PC-9 (cell line): ENCODE measurements at regions of chr1 and their contacts with region 1.

Region 1: DNA sequence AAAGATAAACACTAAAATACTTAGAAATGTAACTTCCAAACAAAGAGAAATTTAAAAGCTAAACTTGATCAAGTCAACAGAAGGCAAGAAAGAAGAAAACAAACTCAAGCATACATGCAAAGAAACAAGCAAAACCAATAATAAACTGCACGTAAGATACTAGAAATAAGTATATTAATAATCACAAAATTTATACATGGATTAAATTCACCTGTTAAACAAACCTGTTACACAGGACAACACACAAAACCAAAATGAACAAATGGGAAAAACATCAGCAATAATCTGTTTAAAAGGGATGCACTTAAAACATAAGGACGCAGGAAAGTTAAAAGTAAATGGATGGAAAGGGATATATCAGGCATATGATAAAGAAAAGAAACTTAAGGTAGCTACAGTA is 165.8 kb downstream of the CDC42BPA start:
- DNase-seq: no peak
- H3K4me3 ChIP-seq: no peak overlapping the region
- H3K27ac ChIP-seq: no peak overlapping the region
- H3K4me1 ChIP-seq: no peaks in the 10 kb centered on the region
- H3K27me3 ChIP-seq: no peaks in the 10 kb centered on the region
- CTCF ChIP-seq: no peak

Region 2: GRCh38 chr1:227111782-227112181 is 40.7 kb before region 1 on chr1:
- CTCF ChIA-PET with region 1: no interaction called
- POLR2A ChIA-PET with region 1: no interaction called
- intact Hi-C with region 1: loop called (anchors 5 kb)
- DNase-seq: no peak
- H3K4me3 ChIP-seq: no peak overlapping the region
- H3K27ac ChIP-seq: no peak overlapping the region
- H3K4me1 ChIP-seq: no peaks in the 10 kb centered on the region
- H3K27me3 ChIP-seq: no peaks in the 10 kb centered on the region
- CTCF ChIP-seq: no peak

Region 3: GRCh38 chr1:227314014-227314848 is 161.7 kb after region 1 on chr1:
- CTCF ChIA-PET with region 1: no interaction called
- POLR2A ChIA-PET with region 1: no interaction called
- intact Hi-C with region 1: no loop called
- DNase-seq: no peak
- H3K4me3 ChIP-seq: peak overlapping the region; percentile 77
- H3K27ac ChIP-seq: no peak overlapping the region
- H3K4me1 ChIP-seq: peaks cover 35% of the 10 kb centered on the region; the same call in 1 of the 2 replicates
- H3K27me3 ChIP-seq: no peaks in the 10 kb centered on the region
- CTCF ChIP-seq: no peak

Region 4: GRCh38 chr1:227707807-227708206 is 555.3 kb after region 1 on chr1:
- CTCF ChIA-PET with region 1: no interaction called
- POLR2A ChIA-PET with region 1: no interaction called
- intact Hi-C with region 1: no loop called
- DNase-seq: no peak
- H3K4me3 ChIP-seq: peak overlapping the region; percentile 6; the same call in 1 of the 2 replicates
- H3K27ac ChIP-seq: no peak overlapping the region
- H3K4me1 ChIP-seq: no peaks in the 10 kb centered on the region
- H3K27me3 ChIP-seq: no peaks in the 10 kb centered on the region
- CTCF ChIP-seq: no peak